Activated CD8-positive, alpha-beta T cell treated with anti-CD3 and anti-CD28 coated beads for 36 hours (primary cell): ENCODE measurements at regions of chr12 and their contacts with region 1.

Region 1: DNA sequence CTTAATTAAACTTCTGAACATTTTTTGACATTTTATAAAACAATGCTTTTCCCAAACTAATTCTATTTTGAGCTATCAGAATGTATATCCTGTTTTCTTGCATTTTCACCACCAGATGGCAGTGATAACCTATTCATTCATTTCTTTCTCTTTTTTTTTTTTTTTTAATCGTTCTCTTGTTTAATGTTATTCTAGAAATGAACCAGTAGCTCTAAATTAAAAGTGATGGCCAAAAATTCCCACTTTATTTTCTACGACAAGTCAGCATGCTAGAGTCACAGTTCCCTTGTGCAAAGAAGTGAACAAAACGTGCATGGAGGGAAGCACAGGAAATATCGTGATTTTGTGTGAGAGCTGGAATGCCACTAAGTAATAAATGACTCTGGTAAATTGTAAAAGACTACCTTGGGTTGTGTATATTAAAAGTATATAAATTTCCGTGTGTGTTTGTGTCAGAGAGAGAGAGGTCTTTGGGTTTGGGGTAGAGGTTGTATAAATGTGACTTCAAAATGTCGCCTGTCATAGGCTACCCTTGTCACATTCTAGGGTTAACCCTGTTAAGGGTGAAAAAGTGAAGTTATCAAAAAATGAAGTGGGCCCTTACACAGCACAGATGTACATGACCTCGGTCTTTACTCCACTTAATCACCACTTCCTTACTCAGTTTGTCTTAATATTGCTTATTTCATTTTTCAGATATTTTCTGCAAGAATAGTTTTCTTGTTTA is 40.4 kb upstream of the LDHB start:
- DNase-seq: no peak
- ATAC-seq: no peak
- H3K4me3 Mint-ChIP-seq: no peak overlapping the region
- H3K27ac Mint-ChIP-seq: no peak overlapping the region
- H3K4me1 Mint-ChIP-seq: peaks cover 8% of the 10 kb centered on the region
- H3K27me3 Mint-ChIP-seq: peaks cover 3% of the 10 kb centered on the region
- CTCF ChIP-seq: peak; percentile 74

Region 2: DNA sequence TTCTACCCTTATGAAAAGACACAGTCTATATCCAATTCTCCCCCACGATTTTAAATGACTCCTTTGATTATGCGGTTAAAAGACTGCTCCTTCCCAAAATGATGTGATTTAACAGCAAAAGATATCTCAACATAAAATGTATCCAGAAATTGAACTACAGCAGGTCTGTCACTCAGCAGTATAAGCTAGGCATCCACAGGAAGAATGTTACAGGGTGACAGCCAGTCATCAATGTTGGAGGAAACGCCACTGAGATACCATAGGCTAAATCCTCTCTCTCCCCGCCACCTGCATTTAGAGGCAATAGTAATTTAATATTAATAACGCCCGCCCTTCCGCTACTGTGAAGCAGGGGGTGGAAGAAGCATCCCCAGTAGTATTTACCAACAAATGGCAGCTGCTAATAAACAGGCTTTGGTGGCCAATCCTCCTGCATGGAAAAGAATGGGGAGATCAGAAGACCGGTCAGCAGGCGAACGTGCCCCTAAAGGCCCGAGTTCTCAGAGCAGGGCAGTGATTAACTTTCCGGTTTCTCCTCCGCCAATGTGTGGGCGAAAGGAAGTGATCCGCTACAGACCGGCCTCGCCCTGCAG is 197.2 kb before region 1 on chr12:
- CTCF ChIA-PET with region 1: no interaction called
- POLR2A ChIA-PET with region 1: no interaction called
- intact Hi-C with region 1: no loop called
- DNase-seq: peak; percentile 80
- ATAC-seq: peak; percentile 68
- H3K4me3 Mint-ChIP-seq: no peak overlapping the region
- H3K27ac Mint-ChIP-seq: no peak overlapping the region
- H3K4me1 Mint-ChIP-seq: peaks cover 55% of the 10 kb centered on the region
- H3K27me3 Mint-ChIP-seq: no peaks in the 10 kb centered on the region
- CTCF ChIP-seq: no peak

Region 3: GRCh38 chr12:21710948-21711775 is 13.1 kb after region 1 on chr12:
- CTCF ChIA-PET with region 1: interaction called, 18 read pairs
- POLR2A ChIA-PET with region 1: no interaction called
- intact Hi-C with region 1: no loop called
- DNase-seq: no peak
- ATAC-seq: no peak
- H3K4me3 Mint-ChIP-seq: no peak overlapping the region
- H3K27ac Mint-ChIP-seq: no peak overlapping the region
- H3K4me1 Mint-ChIP-seq: no peaks in the 10 kb centered on the region
- H3K27me3 Mint-ChIP-seq: peaks cover 13% of the 10 kb centered on the region
- CTCF ChIP-seq: no peak

Region 4: DNA sequence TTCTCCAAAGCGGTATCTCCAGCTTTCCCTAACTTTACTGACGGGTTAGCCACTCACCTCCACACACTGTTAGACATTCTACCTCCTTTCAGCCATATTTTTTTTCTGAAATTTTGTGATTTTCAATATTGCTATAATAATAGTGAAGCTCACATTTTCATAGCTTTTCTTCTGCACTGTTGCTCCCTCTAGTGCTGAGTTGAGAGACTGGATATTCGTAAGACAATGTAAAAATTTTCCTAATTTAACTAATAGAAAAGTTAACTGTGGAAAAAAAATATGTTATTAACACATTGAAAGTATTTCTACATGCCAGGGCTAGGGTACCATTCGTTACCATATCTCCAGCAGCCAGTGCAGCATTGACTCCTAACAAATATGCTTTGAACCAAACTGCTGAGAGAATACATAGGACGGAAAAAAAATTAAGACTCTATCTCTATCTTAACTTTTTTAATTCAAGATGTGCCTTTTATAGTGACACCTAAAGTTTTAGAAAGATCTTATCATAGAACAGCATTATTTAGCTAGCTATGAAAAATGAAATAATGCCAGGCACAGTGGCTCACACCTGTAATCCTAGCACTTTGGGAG is 291.8 kb after region 1 on chr12:
- CTCF ChIA-PET with region 1: interaction called, 20 read pairs
- POLR2A ChIA-PET with region 1: no interaction called
- intact Hi-C with region 1: no loop called
- DNase-seq: no peak
- ATAC-seq: no peak
- H3K4me3 Mint-ChIP-seq: no peak overlapping the region
- H3K27ac Mint-ChIP-seq: no peak overlapping the region
- H3K4me1 Mint-ChIP-seq: peaks cover 4% of the 10 kb centered on the region
- H3K27me3 Mint-ChIP-seq: peaks cover 12% of the 10 kb centered on the region
- CTCF ChIP-seq: peak; percentile 51

Region 5: GRCh38 chr12:22018860-22019259 is 320.8 kb after region 1 on chr12:
- CTCF ChIA-PET with region 1: interaction called, 31 read pairs
- POLR2A ChIA-PET with region 1: interaction called, 3 read pairs
- intact Hi-C with region 1: loop called (anchors 5 kb)
- DNase-seq: no peak
- ATAC-seq: no peak
- H3K4me3 Mint-ChIP-seq: no peak overlapping the region
- H3K27ac Mint-ChIP-seq: no peak overlapping the region
- H3K4me1 Mint-ChIP-seq: no peaks in the 10 kb centered on the region
- H3K27me3 Mint-ChIP-seq: peaks cover 2% of the 10 kb centered on the region
- CTCF ChIP-seq: peak; percentile 46

Region 6: DNA sequence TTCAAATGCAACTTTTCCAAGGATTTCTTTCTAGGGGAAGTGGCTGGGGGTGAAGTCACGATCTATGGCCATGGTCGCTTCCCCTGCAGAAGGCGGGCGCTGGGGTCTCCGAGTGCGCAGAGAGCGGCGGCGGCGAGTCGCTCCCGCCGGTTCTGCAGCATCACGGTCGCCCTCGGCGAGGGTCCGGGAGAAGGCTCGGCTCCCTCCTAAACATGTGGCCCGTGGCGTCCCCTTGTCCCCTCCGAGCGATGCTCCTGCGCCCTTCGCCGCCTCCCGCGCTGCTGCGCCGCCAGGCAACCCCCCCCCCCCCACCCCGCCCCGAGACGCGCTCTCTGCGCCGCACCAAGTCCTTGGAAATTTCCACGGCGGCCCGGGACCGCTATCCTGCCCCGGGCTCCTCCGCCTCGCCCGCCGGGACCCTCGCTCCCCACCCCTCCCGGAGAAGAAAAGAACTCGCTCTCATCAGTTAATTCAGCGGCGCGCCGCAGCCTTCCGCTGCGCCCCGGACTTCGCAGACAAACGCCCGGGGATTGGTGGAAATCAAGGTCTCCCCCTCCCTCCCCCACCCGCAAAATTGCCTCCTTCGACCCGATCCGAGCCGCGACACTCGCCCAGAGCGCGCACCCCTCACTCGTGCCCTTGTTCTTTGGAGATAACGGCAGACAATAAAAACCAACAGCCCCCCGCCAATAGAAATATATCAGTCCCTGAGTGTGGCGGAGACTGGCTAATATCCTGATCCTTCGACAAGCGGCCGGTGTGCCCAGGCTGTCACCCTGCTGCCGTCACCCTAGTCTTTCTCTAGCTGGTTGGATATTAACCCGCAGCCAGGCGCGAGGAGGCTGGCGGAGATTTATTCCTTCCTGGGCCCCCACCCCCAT is 636.6 kb after region 1 on chr12 and contains the start of gene ST8SIA1:
- CTCF ChIA-PET with region 1: no interaction called
- POLR2A ChIA-PET with region 1: no interaction called
- intact Hi-C with region 1: loop called (anchors 10 kb)
- DNase-seq: peak; percentile 60
- ATAC-seq: peak; percentile 45
- H3K4me3 Mint-ChIP-seq: peak within 1 kb of the TSS; percentile 84
- H3K27ac Mint-ChIP-seq: peak within 1 kb of the TSS; percentile 80
- H3K4me1 Mint-ChIP-seq: peaks cover 16% of the 10 kb centered on the region
- H3K27me3 Mint-ChIP-seq: peaks cover 38% of the 10 kb centered on the region
- CTCF ChIP-seq: no peak
- total RNA-seq, gene ST8SIA1: 1.5 to 2.5 TPM

Region 7: DNA sequence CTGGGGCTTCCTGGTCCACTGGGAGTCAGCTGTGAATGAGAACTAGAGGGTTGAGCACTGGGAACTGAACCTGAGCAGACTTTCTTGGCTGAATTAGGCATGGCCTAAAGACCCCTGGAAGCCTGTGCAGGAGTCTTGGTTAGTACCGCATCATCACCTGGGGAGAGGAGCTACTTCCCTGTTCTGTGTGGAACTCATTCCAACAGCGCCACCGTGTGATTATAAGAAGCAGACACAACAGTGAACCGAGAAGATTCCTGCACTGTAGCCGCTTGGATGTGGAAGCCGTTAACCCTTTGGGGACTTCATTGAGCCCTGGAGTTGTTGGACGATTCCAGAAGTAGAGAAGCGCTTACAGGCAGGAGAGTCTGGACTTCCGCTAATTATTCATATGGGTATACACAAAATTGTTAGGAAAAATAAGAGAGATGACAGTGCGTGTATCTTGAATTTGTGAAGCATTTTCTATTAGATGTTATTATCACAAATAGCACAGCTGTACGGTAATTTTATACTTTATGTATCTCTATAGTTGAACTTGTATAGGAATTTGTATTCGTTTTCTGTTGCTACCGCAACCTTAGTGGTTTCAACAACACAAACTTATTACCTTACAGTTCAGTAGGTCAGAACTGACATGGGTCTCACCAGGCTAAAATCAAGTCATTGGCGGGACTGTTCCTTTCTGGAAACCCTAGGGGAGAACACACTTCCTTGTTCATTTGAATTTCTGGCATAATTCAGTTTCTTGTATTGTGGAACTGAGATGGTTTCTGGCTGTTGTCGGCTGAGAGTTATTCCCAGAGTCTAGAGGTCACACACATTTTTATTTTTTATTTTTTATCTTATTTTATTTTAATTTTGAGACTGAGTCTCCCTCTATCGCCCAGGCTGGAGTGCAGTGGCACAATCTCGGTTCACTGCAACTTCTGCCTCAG is 745.6 kb after region 1 on chr12:
- CTCF ChIA-PET with region 1: interaction called, 4 read pairs
- POLR2A ChIA-PET with region 1: no interaction called
- intact Hi-C with region 1: loop called (anchors 10 kb)
- DNase-seq: peak; percentile 68
- ATAC-seq: peak; percentile 99
- H3K4me3 Mint-ChIP-seq: no peak overlapping the region
- H3K27ac Mint-ChIP-seq: no peak overlapping the region
- H3K4me1 Mint-ChIP-seq: no peaks in the 10 kb centered on the region
- H3K27me3 Mint-ChIP-seq: no peaks in the 10 kb centered on the region
- CTCF ChIP-seq: peak; percentile 77